ENCODE measurements at regions of chr4 and their contacts with region 1.

Region 1: DNA sequence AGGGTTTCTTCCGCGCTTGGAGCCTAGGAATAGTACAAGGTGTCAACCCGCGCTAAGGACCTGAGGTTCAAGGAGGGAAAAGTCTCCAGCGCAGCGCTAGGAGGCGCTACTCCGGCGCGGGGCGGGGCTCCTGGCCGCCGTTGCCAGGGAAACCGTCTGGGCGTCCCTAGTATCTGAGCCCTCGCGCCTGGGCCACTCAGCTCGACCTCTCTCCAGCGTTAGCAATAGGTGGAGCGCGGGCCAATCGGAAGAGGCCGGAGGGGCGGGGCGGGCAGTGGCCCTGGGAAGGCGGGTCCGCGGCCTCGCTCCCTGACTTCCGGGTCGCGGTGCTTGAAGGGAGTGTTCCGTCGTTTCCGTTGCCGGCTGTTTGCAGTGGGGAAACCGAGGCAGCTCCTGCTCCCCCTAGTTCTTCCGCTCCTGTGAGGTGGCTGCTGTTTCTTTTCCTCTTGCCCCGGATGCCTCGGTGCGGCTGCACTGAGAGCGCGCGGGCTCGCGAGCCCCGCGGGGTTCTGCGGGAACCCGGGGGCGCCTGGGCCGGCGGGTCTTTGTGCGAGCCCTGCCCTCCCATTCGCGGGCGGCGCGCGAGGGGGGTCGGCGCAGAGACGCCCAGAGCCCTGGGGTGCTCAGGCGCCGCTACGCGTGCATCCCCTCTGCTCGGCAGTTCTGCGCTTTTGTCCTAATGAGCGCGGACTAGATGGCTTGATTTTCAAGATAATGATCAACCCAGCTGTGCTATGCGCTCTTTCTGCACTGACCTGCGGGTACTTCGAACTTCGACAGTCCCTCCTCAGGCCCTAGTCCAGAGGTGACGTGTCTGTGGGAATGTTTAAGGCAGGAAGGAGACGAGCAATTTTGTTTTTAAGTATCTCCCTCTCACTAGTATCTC is at the start of gene ELMOD2:
- DNase-seq: peak; percentile 95
- ATAC-seq: peak; percentile 99
- H3K4me3 ChIP-seq: peak within 1 kb of the TSS; percentile 76 to 84 (median 84)
- H3K27ac ChIP-seq: peak within 1 kb of the TSS; percentile 90
- H3K4me1 ChIP-seq: peaks cover 26% of the 10 kb centered on the region
- H3K27me3 ChIP-seq: peaks cover 0 to 3% of the 10 kb centered on the region in 2 experiments; a peak in 1 of 5 replicates
- CTCF ChIP-seq: peak; percentile 96
- EP300 ChIP-seq: peak in 1 of 2 experiments; percentile 56; a peak in 2 of 4 replicates
- POLR2A ChIP-seq: peak; percentile 91 to 93
- RAD21 ChIP-seq: peak; percentile 47; the same call in 1 of the 2 replicates
- total RNA-seq, gene ELMOD2: 25.4 and 38.1 TPM in 2 replicates

Region 2: GRCh38 chr4:140252742-140253555 is 271.2 kb before region 1 on chr4:
- CTCF ChIA-PET with region 1: no interaction called
- POLR2A ChIA-PET with region 1: no interaction called
- in situ Hi-C with region 1: no loop called
- intact Hi-C with region 1: no loop called
- DNase-seq: no peak
- ATAC-seq: peak; percentile 90
- H3K4me3 ChIP-seq: peak overlapping the region; percentile 38 to 67 (median 50); a peak in 5 of 6 replicates
- H3K27ac ChIP-seq: no peak overlapping the region
- H3K4me1 ChIP-seq: peaks cover 43% of the 10 kb centered on the region
- H3K27me3 ChIP-seq: peaks cover 2 to 8% of the 10 kb centered on the region in 2 experiments; a peak in 2 of 5 replicates
- CTCF ChIP-seq: peak; percentile 76
- EP300 ChIP-seq: no peak
- POLR2A ChIP-seq: no peak
- RAD21 ChIP-seq: peak; percentile 66

Region 3: DNA sequence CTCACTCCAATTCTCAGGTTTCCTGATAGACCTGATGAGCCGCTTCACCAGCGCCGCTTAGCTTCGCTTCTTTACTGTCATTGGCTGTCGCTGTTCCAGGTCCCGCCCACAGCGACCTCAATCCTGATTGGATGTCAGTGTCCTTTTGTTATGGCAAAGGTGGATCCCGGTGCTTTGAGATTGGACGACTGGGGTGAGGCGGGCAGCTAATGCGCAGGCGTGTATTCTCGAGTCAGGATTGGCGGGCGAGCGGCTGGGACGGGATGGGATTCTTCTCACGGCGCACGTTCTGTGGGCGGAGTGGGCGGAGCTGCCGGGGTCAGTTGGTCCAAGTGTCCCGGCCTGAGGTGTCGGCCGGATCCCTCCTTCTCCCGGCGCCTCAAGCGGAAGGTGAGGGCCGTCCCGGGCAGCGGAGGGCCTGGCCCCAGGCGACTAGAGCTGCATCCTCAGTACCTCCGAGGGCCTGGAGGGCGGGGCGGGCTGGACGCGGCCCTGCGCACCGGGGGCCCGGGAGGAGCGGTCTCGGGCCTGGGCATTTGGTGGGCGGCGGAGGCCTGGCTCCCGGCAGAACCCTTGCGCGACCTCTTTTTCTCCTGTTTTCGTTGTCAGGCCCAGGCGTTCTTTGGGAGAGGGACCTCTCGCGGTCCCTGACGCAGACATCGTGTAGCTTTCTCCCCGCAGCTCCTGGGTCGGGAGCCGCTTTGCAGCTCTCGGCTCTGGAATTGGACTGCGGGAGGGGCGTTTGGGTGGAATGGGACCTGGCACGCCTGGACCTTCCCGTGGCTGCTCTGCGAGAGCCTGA is 150.6 kb before region 1 on chr4 and contains the start of gene SCOC:
- CTCF ChIA-PET with region 1: no interaction called
- POLR2A ChIA-PET with region 1: interaction called, 19 read pairs
- in situ Hi-C with region 1: no loop called
- intact Hi-C with region 1: loop called (anchors 1 kb)
- DNase-seq: peak; percentile 99
- ATAC-seq: peak; percentile 96
- H3K4me3 ChIP-seq: peak within 1 kb of the TSS; percentile 78 to 86 (median 85)
- H3K27ac ChIP-seq: peak within 1 kb of the TSS; percentile 85
- H3K4me1 ChIP-seq: peaks cover 45% of the 10 kb centered on the region
- H3K27me3 ChIP-seq: no peaks in the 10 kb centered on the region
- CTCF ChIP-seq: no peak
- EP300 ChIP-seq: no peak
- POLR2A ChIP-seq: peak in 1 of 2 experiments; percentile 82; a peak in 3 of 4 replicates
- RAD21 ChIP-seq: no peak
- total RNA-seq, gene SCOC: 65.2 and 109 TPM in 2 replicates

Region 4: DNA sequence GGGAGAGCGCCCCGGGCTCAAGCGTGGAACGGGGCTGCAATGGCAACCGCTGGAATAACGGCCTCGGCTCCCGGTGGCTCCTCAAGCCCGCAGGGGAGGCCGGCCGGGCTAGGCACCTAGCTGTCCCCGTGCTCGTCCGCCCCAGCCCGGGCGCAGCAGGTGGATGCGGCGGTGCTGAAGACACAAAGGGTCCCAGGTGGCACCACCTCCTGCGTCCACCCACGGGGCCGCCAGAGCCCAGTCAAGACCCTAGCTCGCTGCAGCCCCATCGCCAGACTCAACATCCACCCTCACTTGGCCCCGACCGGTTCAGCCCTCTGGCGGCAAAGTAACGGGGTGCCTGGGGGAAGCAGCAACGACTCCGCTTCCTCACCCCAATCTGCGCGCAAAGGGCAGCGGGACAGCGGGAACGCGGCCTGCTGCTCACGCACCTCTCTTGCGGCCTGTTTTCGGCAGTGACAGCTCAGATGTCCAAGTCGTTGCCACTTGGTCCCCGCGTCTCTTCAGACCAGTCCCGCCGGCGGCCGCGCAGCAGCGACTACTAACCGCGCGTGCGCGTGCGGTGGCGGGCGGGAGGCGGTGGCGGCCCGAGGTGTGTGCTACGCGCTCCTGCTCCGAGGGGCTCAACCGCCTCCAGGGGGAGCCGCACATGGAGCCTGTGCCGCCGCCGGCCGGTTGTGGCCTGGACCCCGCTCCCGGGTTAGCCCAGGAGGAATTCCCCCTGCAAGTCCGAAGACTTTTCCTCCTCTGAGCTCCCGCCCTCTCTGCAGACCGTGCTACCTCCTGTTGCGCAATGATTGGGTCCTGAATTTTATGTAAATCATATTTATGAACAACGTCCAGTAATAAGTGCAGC is 96.8 kb before region 1 on chr4 and contains the start of gene CLGN:
- CTCF ChIA-PET with region 1: no interaction called
- POLR2A ChIA-PET with region 1: interaction called, 14 read pairs
- in situ Hi-C with region 1: no loop called
- intact Hi-C with region 1: loop called (anchors 1 kb)
- DNase-seq: peak; percentile 77
- ATAC-seq: peak; percentile 94
- H3K4me3 ChIP-seq: peak within 1 kb of the TSS; percentile 82 to 93 (median 92)
- H3K27ac ChIP-seq: peak within 1 kb of the TSS; percentile 75
- H3K4me1 ChIP-seq: peaks cover 24% of the 10 kb centered on the region
- H3K27me3 ChIP-seq: no peaks in the 10 kb centered on the region; a peak in 1 of 5 replicates
- CTCF ChIP-seq: peak; percentile 86
- EP300 ChIP-seq: no peak; a peak in 1 of 4 replicates
- POLR2A ChIP-seq: peak; percentile 66 to 80
- RAD21 ChIP-seq: peak; percentile 72
- total RNA-seq, gene CLGN: 10.0 and 17.0 TPM in 2 replicates

Region 5: GRCh38 chr4:140609548-140610425 is 85.7 kb after region 1 on chr4:
- CTCF ChIA-PET with region 1: interaction called, 3 read pairs
- POLR2A ChIA-PET with region 1: interaction called, 3 read pairs
- in situ Hi-C with region 1: no loop called
- intact Hi-C with region 1: loop called (anchors 1 kb)
- DNase-seq: peak; percentile 53
- ATAC-seq: peak; percentile 92
- H3K4me3 ChIP-seq: peak overlapping the region in 1 of 3 experiments; percentile 9; a peak in 1 of 6 replicates
- H3K27ac ChIP-seq: no peak overlapping the region
- H3K4me1 ChIP-seq: peaks cover 27% of the 10 kb centered on the region
- H3K27me3 ChIP-seq: no peaks in the 10 kb centered on the region
- CTCF ChIP-seq: peak; percentile 69
- EP300 ChIP-seq: no peak
- POLR2A ChIP-seq: no peak
- RAD21 ChIP-seq: peak; percentile 32; the same call in 1 of the 2 replicates

Region 6: DNA sequence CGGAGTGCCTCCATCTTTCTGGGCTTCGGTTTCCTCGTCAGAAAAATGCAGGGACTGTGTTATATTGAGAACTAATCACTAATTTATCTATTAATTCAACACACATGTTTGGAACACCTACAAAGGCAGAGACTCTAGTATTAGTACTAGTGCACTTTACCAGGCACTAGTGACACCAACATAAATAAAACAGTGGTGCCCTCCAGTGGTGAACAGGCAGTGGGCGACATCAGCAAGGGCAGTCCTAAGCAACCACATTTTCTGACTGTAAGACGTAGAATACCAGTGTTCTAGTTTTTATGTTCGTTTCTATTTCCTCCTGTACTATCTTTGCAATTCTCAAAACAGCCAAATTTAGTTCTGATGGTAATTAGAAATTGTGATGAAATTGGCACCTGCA is 113.7 kb after region 1 on chr4:
- CTCF ChIA-PET with region 1: no interaction called
- POLR2A ChIA-PET with region 1: interaction called, 6 read pairs
- in situ Hi-C with region 1: loop called (anchors 5 kb)
- intact Hi-C with region 1: no loop called
- DNase-seq: peak; percentile 59
- ATAC-seq: peak; percentile 19; the same call in 1 of the 3 replicates
- H3K4me3 ChIP-seq: no peak overlapping the region
- H3K27ac ChIP-seq: no peak overlapping the region
- H3K4me1 ChIP-seq: peaks cover 82% of the 10 kb centered on the region
- H3K27me3 ChIP-seq: no peaks in the 10 kb centered on the region
- CTCF ChIP-seq: peak; percentile 79
- EP300 ChIP-seq: no peak
- POLR2A ChIP-seq: no peak
- RAD21 ChIP-seq: peak; percentile 45; the same call in 1 of the 2 replicates